Ascending aorta (tissue), 2 donors: ENCODE measurements at regions of chr1 and their contacts with region 1.

Region 1: DNA sequence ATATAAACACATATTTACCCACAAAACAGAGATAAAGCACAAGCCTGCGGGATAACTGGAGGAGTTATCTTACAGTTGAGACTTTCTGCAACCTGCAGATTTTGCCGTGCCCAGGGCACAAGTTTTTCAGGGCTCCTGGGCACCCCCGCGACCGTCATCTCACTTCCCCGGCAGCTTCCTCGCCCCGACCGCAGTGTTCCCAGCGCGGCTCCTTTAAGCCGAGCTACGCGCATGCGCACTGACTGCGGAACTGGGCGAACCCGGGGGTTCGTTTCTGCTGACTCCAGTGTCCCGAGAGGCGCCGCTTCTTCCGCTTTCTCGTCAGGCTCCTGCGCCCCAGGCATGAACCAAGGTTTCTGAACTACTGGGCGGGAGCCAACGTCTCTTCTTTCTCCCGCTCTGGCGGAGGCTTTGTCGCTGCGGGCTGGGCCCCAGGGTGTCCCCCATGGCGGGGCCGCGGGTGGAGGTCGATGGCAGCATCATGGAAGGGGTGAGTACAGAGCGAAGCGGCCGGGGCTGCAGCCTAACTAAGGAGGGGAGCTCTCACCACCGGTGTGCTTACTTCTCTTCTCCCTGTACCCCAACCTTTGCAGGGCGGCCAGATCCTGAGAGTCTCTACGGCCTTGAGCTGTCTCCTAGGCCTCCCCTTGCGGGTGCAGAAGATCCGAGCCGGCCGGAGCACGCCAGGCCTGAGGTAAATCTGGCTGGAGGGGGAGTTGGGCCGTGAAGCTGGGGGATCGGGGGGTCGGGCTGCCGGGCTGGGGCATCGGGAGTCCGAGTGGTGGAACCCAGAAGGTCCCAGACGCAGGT is at the start of gene RTCA:
- DNase-seq: peak; percentile 84 to 98
- H3K4me3 ChIP-seq: peak within 1 kb of the TSS; percentile 92 to 98
- H3K27ac ChIP-seq: peak within 1 kb of the TSS; percentile 76 to 84
- H3K4me1 ChIP-seq: peaks cover 3 to 17% of the 10 kb centered on the region in 2 donors
- H3K27me3 ChIP-seq: no peaks in the 10 kb centered on the region
- CTCF ChIP-seq: no peak
- total RNA-seq, gene RTCA: 2.8 TPM

Region 2: DNA sequence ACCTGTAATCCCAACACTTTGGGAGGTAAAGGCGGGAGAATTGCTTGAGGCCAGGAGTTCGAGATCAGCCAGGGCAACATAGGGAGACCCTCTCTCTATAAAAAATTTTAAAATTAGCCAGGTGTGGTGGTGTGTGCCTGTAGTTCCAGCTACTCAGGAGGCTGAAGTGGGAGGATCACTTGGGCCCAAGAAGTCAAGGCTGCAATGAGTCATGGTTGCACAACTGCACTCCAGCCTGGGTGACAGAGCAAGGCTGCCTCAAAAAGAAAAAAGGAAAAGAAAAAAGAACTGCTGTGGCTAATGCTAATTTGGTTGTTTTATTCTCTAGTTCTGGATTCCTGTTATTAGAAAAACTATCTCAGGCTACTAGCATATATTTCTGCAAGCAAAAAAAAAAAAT is 46.3 kb before region 1 on chr1:
- intact Hi-C with region 1: no loop called
- DNase-seq: no peak
- H3K4me3 ChIP-seq: no peak overlapping the region
- H3K27ac ChIP-seq: no peak overlapping the region
- H3K4me1 ChIP-seq: no peaks in the 10 kb centered on the region
- H3K27me3 ChIP-seq: no peaks in the 10 kb centered on the region
- CTCF ChIP-seq: no peak

Region 3: DNA sequence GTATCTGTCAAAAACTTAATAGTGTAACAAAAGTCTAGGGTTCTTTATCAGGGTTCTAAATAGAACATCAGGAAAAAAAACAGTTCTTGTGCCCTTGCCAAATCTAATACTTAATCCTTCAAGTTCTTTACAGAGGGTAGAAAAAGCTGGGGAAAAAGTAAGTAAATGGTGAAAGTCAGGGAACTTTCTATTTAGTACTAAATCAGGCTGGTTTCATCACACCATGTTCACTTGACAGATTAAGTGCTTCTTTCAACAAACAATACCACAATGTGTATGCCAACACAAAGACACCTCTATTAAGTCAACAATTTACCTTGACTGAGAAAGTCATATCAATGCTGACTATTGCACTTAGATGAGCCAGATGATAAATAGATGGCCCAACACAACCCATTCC is 26.2 kb before region 1 on chr1:
- intact Hi-C with region 1: loop called (anchors 1 kb)
- DNase-seq: no peak
- H3K4me3 ChIP-seq: no peak overlapping the region
- H3K27ac ChIP-seq: no peak overlapping the region
- H3K4me1 ChIP-seq: no peaks in the 10 kb centered on the region
- H3K27me3 ChIP-seq: no peaks in the 10 kb centered on the region
- CTCF ChIP-seq: no peak

Region 4: DNA sequence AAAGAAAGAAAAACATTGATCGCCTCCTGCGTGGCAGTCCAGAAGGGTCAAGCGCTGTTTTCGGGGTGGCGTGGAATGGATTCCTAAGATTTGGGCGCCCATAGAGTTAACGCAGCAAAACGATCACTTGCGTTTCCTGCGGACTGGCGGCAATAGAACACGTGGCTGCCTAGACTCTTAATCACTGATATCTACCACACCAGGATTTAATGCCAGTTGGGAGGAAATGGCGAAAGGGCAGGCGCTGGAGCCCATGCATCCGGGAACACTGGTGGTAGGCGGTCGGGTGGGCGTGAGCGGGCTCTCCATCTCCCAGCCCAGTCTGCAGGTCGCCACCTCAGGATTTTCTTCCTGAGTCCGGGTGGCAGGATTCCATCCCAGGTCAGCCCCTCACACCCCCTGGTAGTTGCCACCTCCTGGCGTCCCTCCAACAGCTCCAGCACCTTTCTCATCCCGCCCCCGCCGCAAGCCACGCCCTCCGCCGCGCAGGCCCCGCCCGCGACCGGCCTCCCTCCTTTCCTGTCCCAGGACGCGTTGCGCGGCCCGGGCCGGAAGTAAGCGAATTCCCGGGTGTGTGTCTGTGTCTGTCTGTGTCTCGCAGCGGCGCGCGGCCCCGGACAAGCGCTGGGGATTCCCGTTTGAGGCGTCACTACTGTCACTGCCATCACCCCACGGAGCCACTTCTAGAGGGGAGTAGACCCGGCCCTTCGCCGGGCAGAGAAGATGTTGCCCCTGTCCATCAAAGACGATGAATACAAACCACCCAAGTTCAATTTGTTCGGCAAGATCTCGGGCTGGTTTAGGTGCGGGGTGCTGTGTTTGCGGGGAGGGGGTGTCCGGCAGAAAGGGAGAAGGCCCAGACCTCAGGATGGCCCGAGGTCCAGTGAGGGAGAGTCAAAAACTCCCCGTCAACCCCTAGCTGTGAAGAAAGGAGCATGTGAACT is 629.7 kb after region 1 on chr1 and contains the start of gene SLC30A7:
- intact Hi-C with region 1: loop called (anchors 5 kb)
- DNase-seq: peak; percentile 84 to 97
- H3K4me3 ChIP-seq: peak within 1 kb of the TSS; percentile 77 to 79
- H3K27ac ChIP-seq: peak within 1 kb of the TSS; percentile 96 to 97
- H3K4me1 ChIP-seq: peaks cover 0 to 13% of the 10 kb centered on the region in 2 donors
- H3K27me3 ChIP-seq: no peaks in the 10 kb centered on the region
- CTCF ChIP-seq: no peak
- total RNA-seq, gene SLC30A7: 12.1 TPM